Cardiac septum (tissue), 1 donor: ENCODE measurements at regions of chr21 and their contacts with region 1.

Region 1: GRCh38 chr21:30340441-30341241 is 3.1 kb upstream of the KRTAP27-1 start:
- DNase-seq: no peak

Region 2: GRCh38 chr21:30240646-30241045 is 100.0 kb before region 1 on chr21:
- intact Hi-C with region 1: no loop called
- DNase-seq: no peak

Region 3: GRCh38 chr21:30408782-30409494 is 68.3 kb after region 1 on chr21:
- intact Hi-C with region 1: loop called (anchors 10 kb)
- DNase-seq: peak; percentile 77

Region 4: GRCh38 chr21:30434033-30434631 is 93.5 kb after region 1 on chr21:
- intact Hi-C with region 1: loop called (anchors 5 kb)
- DNase-seq: no peak